Activated CD8-positive, alpha-beta T cell treated with anti-CD3 and anti-CD28 coated beads for 36 hours (primary cell): ENCODE measurements at regions of chr11 and their contacts with region 1.

Region 1: DNA sequence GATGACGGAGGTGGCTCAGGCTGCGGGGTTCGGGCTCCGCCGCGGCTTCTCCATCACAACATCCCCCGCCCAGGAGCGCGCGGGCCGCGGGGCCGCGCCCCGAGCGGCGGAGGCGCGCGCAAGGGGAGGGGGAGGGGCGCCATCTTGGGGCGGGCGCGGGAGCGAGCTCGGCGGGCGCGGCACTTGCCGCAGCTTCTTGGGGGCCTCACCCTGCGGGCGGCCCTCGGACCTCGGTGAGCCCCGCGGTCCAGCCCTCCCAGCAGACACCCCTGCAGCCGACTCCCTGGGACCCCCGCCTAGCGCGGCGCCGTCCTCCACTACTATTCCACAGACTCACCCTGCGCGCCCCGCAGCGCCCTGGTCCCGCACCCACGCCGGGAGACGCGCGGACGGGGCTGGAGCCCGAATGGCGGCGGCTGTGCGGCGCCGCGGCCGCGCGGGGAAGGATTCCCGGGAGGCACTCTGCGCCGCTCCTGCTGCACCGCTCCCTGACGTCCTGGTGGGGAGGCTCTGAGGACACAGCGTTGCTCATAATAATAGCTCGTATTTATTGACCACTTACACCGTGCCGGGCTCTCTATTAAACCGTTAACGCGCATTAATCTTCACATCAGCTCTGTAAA is at the start of gene APBB1:
- DNase-seq: peak; percentile 69
- ATAC-seq: peak; percentile 72
- H3K4me3 Mint-ChIP-seq: no peak within 1 kb of the TSS
- H3K27ac Mint-ChIP-seq: peak within 1 kb of the TSS; percentile 75
- H3K4me1 Mint-ChIP-seq: peaks cover 4% of the 10 kb centered on the region
- H3K27me3 Mint-ChIP-seq: peaks cover 8% of the 10 kb centered on the region
- CTCF ChIP-seq: no peak
- total RNA-seq, gene APBB1: 28.1 to 31.1 TPM

Region 2: GRCh38 chr11:6389921-6390724 is 29.0 kb before region 1 on chr11 and contains the start of gene SMPD1:
- CTCF ChIA-PET with region 1: interaction called, 7 read pairs
- POLR2A ChIA-PET with region 1: interaction called, 13 read pairs
- intact Hi-C with region 1: no loop called
- DNase-seq: peak; percentile 95
- ATAC-seq: peak; percentile 83
- H3K4me3 Mint-ChIP-seq: peak within 1 kb of the TSS; percentile 79
- H3K27ac Mint-ChIP-seq: peak within 1 kb of the TSS; percentile 94
- H3K4me1 Mint-ChIP-seq: peaks cover 44% of the 10 kb centered on the region
- H3K27me3 Mint-ChIP-seq: no peaks in the 10 kb centered on the region
- CTCF ChIP-seq: no peak
- total RNA-seq, gene SMPD1: 10.6 to 11.2 TPM

Region 3: DNA sequence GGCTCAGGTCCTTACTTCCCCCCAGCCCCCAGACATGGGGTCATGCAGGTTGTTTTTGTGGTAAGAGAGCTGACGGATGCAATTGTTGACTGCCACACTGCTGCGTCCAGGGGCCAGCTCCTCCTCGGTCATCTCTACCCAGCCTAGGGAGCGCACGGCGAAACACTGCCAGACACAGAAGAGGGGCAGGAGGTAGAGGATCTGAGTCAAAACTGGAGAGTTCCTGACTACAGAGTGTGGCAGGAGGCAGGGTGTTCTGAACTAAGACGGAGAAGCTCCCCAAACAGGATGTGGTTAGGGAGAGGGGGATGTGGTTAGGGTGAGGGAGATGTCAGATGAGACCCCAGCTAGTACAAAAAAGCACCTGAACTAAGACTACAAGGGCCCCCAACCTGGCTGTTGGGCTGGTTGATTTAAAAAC is 16.5 kb before region 1 on chr11:
- CTCF ChIA-PET with region 1: interaction called, 6 read pairs
- POLR2A ChIA-PET with region 1: interaction called, 17 read pairs
- intact Hi-C with region 1: no loop called
- DNase-seq: peak; percentile 92
- ATAC-seq: peak; percentile 82
- H3K4me3 Mint-ChIP-seq: peak overlapping the region; percentile 50
- H3K27ac Mint-ChIP-seq: peak overlapping the region; percentile 93
- H3K4me1 Mint-ChIP-seq: peaks cover 75% of the 10 kb centered on the region
- H3K27me3 Mint-ChIP-seq: no peaks in the 10 kb centered on the region
- CTCF ChIP-seq: no peak

Region 4: DNA sequence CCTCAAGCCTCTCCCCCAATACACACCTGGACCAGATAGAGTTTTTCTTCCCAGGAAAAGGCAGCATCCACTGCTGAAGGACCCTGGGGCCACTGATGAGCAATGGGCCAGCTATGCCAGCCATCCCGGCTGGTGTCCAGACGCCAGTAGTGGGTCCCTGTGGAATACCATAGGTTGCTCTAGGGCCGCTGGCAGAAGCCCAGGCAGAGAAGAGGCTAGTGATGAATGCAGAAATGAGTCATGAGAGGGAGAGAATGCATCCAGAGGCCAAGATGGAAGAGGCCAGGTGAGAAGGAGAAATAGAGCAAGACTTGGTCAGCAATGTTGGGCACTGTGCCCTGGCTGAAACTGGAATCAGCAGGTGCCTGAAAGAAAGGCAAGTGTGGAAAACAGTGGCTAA is 12.7 kb after region 1 on chr11:
- CTCF ChIA-PET with region 1: interaction called, 12 read pairs
- POLR2A ChIA-PET with region 1: interaction called, 4 read pairs
- intact Hi-C with region 1: no loop called
- DNase-seq: no peak
- ATAC-seq: no peak
- H3K4me3 Mint-ChIP-seq: no peak overlapping the region
- H3K27ac Mint-ChIP-seq: no peak overlapping the region
- H3K4me1 Mint-ChIP-seq: peaks cover 3% of the 10 kb centered on the region
- H3K27me3 Mint-ChIP-seq: no peaks in the 10 kb centered on the region
- CTCF ChIP-seq: no peak